Cardiac septum (tissue), 1 donor: ENCODE measurements at regions of chr20 and their contacts with region 1.

Region 1: DNA sequence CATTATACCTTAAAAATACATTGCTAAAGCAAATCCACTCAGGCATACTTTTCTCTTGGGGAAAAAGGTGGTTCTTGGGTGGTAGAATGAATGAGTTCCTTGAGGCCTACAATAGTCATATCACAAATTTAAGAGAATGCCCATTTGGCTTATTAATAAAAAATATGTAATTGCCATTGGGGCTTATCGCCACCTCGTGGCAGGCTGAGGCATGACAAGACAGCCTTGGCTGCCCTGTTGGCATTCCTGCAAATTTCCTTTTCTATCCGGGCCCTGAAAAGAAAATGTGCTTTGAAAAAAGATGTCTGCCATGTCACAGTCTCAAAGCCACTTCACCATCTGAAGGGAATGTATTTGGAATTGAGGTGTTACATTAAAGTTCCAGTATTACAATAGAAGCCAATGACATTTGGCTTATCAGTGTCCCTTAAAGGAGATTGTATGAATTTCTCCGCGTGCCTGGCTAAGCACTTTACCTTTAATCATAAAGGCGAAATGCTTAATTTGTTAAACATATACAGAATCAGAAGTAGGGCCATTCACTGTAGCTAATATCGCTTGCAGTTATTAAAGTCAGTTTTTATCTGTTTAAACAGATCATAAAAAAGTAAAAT is 188.3 kb upstream of the ZFP64 start:
- DNase-seq: no peak

Region 2: DNA sequence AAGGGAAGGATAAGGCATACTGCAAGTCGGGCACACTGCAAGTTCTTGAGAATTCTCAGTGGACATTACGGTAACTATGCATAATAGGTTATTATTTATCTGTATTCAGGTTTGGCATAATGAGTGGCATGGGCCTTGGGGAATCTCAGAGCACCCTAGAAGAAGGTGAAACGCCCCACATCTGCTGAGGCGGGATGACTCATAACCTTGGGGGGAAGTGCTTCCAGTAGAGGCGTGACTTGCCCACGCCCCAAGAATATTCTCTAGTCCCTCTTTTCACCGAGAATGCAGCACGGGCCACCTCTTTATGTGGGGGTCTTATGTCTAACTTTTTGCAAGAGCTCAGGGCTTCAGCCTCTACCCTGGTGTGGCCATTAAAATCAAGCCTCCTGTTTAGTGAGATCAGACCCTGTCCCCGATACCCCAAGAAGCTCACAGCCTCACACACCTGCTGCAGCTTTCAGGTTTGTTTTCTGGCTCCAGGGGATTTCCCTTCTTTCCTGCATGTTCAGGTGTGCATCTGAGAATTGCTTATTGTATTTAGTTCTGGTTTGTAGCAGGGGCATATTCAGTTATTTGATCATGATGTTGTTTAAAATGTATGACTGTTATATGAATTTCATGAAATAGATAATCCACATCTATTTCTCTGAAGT is 207.3 kb before region 1 on chr20:
- intact Hi-C with region 1: no loop called
- DNase-seq: no peak

Region 3: GRCh38 chr20:52242237-52243230 is 137.3 kb before region 1 on chr20:
- intact Hi-C with region 1: loop called (anchors 10 kb)
- DNase-seq: no peak

Region 4: GRCh38 chr20:52312132-52312729 is 67.6 kb before region 1 on chr20:
- intact Hi-C with region 1: loop called (anchors 5 kb)
- DNase-seq: no peak

Region 5: GRCh38 chr20:52539891-52540290 is 160.1 kb after region 1 on chr20:
- intact Hi-C with region 1: no loop called
- DNase-seq: no peak